ENCODE measurements at regions of chr4 and their contacts with region 1.

Region 1: GRCh38 chr4:173370477-173371291 is at the start of gene SAP30:
- DNase-seq: peak; percentile 91
- ATAC-seq: peak; percentile 79
- H3K4me3 Mint-ChIP-seq: peak within 1 kb of the TSS; percentile 100
- H3K27ac Mint-ChIP-seq: peak within 1 kb of the TSS; percentile 95
- H3K4me1 Mint-ChIP-seq: peaks cover 38% of the 10 kb centered on the region
- H3K27me3 Mint-ChIP-seq: no peaks in the 10 kb centered on the region
- total RNA-seq, gene SAP30: 15.5 to 16.4 TPM

Region 2: DNA sequence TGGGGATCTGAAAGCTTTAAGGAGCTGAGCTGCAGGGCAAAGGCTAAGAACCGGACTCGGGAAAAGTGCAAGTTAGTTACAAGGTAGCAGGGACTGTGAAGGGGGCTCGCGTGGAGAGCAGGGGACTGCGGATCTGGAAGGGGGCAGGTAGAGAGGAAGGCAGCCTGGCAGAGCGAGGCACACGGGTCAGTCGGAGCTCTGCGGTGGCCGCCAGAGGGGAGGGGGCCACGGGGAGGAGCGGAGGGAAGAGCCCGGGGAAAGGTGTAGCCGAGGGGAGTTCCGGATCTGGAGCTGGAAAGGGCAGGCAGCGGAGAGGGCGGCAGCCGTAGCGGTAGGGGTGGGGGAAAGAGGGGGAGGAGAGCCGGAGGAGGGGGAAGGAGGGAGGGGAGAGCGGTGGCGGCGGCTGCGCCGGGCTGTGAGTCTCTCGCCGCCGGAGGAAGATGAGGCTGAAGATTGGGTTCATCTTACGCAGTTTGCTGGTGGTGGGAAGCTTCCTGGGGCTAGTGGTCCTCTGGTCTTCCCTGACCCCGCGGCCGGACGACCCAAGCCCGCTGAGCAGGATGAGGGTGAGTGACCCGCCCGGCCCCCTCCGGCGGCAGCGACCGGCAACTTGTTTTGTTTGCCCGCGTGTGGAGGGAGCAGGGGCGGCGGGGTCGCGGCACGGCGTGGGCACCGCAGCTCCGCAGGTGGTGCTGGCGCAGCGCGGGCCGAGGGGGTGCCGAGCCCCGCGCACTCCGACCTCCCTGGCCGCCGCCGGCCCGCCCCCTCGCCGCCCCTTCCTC is 202.1 kb before region 1 on chr4 and contains the start of gene GALNT7:
- POLR2A ChIA-PET with region 1: interaction called, 11 read pairs
- DNase-seq: peak; percentile 71
- ATAC-seq: peak; percentile 41
- H3K4me3 Mint-ChIP-seq: peak within 1 kb of the TSS; percentile 97
- H3K27ac Mint-ChIP-seq: peak within 1 kb of the TSS; percentile 93
- H3K4me1 Mint-ChIP-seq: peaks cover 45% of the 10 kb centered on the region
- H3K27me3 Mint-ChIP-seq: no peaks in the 10 kb centered on the region
- total RNA-seq, gene GALNT7: 15.9 to 16.2 TPM

Region 3: GRCh38 chr4:173301518-173302201 is 69.0 kb before region 1 on chr4:
- POLR2A ChIA-PET with region 1: no interaction called
- DNase-seq: no peak
- ATAC-seq: peak; percentile 36
- H3K4me3 Mint-ChIP-seq: no peak overlapping the region
- H3K27ac Mint-ChIP-seq: no peak overlapping the region
- H3K4me1 Mint-ChIP-seq: peaks cover 4% of the 10 kb centered on the region
- H3K27me3 Mint-ChIP-seq: no peaks in the 10 kb centered on the region

Region 4: GRCh38 chr4:173380987-173381386 is 10.3 kb after region 1 on chr4:
- POLR2A ChIA-PET with region 1: no interaction called
- DNase-seq: no peak
- ATAC-seq: no peak
- H3K4me3 Mint-ChIP-seq: no peak overlapping the region
- H3K27ac Mint-ChIP-seq: no peak overlapping the region
- H3K4me1 Mint-ChIP-seq: no peaks in the 10 kb centered on the region
- H3K27me3 Mint-ChIP-seq: peaks cover 20% of the 10 kb centered on the region

Measured in activated naive CD8-positive, alpha-beta T cell treated with anti-CD3 and anti-CD28 coated beads, Interleukin-2, amount 10 ng/mL, durations not matched to agents 7 days and 5 days (primary cell).